ENCODE measurements at regions of chr12 and their contacts with region 1.

Region 1: GRCh38 chr12:27014085-27014858 is at the start of gene TM7SF3:
- DNase-seq: peak; percentile 97
- ATAC-seq: peak; percentile 93
- H3K4me3 ChIP-seq: peak within 1 kb of the TSS; percentile 78 to 86 (median 83)
- H3K4me3 Mint-ChIP-seq: peak within 1 kb of the TSS; percentile 96
- H3K27ac ChIP-seq: peak within 1 kb of the TSS; percentile 90 to 91
- H3K27ac Mint-ChIP-seq: peak within 1 kb of the TSS; percentile 96
- H3K4me1 ChIP-seq: peaks cover 24 to 25% of the 10 kb centered on the region in 2 donors
- H3K4me1 Mint-ChIP-seq: peaks cover 47% of the 10 kb centered on the region
- H3K27me3 ChIP-seq: no peaks in the 10 kb centered on the region
- H3K27me3 Mint-ChIP-seq: no peaks in the 10 kb centered on the region
- CTCF ChIP-seq: peak; percentile 92
- total RNA-seq, gene TM7SF3: 33.5 and 42.0 TPM in 2 replicates

Region 2: GRCh38 chr12:26701604-26702215 is 312.6 kb before region 1 on chr12:
- CTCF ChIA-PET with region 1: no interaction called
- POLR2A ChIA-PET with region 1: no interaction called
- intact Hi-C with region 1: loop called (anchors 10 kb)
- DNase-seq: peak; percentile 55
- ATAC-seq: no peak
- H3K4me3 ChIP-seq: no peak overlapping the region
- H3K4me3 Mint-ChIP-seq: no peak overlapping the region
- H3K27ac ChIP-seq: no peak overlapping the region
- H3K27ac Mint-ChIP-seq: no peak overlapping the region
- H3K4me1 ChIP-seq: peaks cover 11 to 14% of the 10 kb centered on the region in 2 donors
- H3K4me1 Mint-ChIP-seq: peaks cover 9% of the 10 kb centered on the region
- H3K27me3 ChIP-seq: no peaks in the 10 kb centered on the region
- H3K27me3 Mint-ChIP-seq: no peaks in the 10 kb centered on the region
- CTCF ChIP-seq: peak; percentile 87

Region 3: GRCh38 chr12:26853303-26854030 is 160.8 kb before region 1 on chr12:
- CTCF ChIA-PET with region 1: interaction called, 11 read pairs
- POLR2A ChIA-PET with region 1: no interaction called
- intact Hi-C with region 1: loop called (anchors 1 kb)
- DNase-seq: peak; percentile 79
- ATAC-seq: peak; percentile 92
- H3K4me3 ChIP-seq: no peak overlapping the region
- H3K4me3 Mint-ChIP-seq: no peak overlapping the region
- H3K27ac ChIP-seq: no peak overlapping the region
- H3K27ac Mint-ChIP-seq: peak overlapping the region; percentile 13
- H3K4me1 ChIP-seq: peaks cover 3 to 8% of the 10 kb centered on the region in 2 donors
- H3K4me1 Mint-ChIP-seq: no peaks in the 10 kb centered on the region
- H3K27me3 ChIP-seq: no peaks in the 10 kb centered on the region
- H3K27me3 Mint-ChIP-seq: no peaks in the 10 kb centered on the region
- CTCF ChIP-seq: peak; percentile 94

Region 4: GRCh38 chr12:26971963-26972362 is 42.3 kb before region 1 on chr12:
- CTCF ChIA-PET with region 1: interaction called, 3 read pairs
- POLR2A ChIA-PET with region 1: no interaction called
- intact Hi-C with region 1: loop called (anchors 5 kb)
- DNase-seq: peak; percentile 47
- ATAC-seq: peak; percentile 80
- H3K4me3 ChIP-seq: no peak overlapping the region
- H3K4me3 Mint-ChIP-seq: no peak overlapping the region
- H3K27ac ChIP-seq: no peak overlapping the region
- H3K27ac Mint-ChIP-seq: no peak overlapping the region
- H3K4me1 ChIP-seq: peaks cover 9 to 17% of the 10 kb centered on the region in 2 donors
- H3K4me1 Mint-ChIP-seq: peaks cover 20% of the 10 kb centered on the region
- H3K27me3 ChIP-seq: no peaks in the 10 kb centered on the region
- H3K27me3 Mint-ChIP-seq: no peaks in the 10 kb centered on the region
- CTCF ChIP-seq: no peak

Region 5: GRCh38 chr12:27123642-27124041 is 109.4 kb after region 1 on chr12:
- CTCF ChIA-PET with region 1: interaction called, 3 read pairs
- POLR2A ChIA-PET with region 1: no interaction called
- intact Hi-C with region 1: loop called (anchors 1 kb)
- DNase-seq: peak; percentile 48
- ATAC-seq: no peak
- H3K4me3 ChIP-seq: no peak overlapping the region
- H3K4me3 Mint-ChIP-seq: no peak overlapping the region
- H3K27ac ChIP-seq: no peak overlapping the region
- H3K27ac Mint-ChIP-seq: no peak overlapping the region
- H3K4me1 ChIP-seq: no peaks in the 10 kb centered on the region
- H3K4me1 Mint-ChIP-seq: no peaks in the 10 kb centered on the region
- H3K27me3 ChIP-seq: no peaks in the 10 kb centered on the region
- H3K27me3 Mint-ChIP-seq: no peaks in the 10 kb centered on the region
- CTCF ChIP-seq: peak; percentile 58

Region 6: DNA sequence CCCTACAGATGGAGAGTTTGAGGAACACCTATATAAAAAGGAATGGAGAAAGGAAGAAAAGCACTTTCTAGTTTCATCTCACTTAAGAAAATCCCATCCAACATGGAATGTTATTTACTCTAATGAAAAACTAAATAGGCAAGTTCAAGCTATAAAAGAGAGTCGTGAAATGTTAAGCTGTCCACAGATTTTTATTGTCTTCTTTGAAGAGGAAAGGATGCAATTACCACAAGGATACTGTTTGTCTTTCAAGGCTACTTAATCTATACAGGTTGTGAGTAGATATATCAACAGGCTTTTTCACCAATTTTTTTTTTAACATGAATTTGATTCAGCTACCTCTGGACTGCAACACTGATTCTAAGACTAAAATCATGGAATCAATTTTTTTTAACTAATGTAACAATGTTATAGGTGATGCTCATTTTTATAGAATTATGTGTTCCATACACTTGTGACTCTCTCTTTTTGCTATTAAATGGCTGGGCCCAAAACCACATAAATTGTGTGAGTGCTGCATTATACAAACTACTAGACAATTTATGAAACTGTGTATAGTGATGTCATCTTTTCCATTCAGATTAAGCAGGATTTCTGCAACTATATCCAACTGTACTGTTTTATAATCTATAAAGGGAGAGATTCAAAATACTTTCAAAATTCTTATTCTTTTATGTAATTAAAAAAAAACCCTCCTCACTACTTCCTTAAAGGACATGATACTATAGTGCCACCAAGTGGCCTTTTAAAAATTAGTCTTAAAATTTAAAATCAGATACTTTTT is 291.6 kb after region 1 on chr12:
- CTCF ChIA-PET with region 1: interaction called, 103 read pairs
- POLR2A ChIA-PET with region 1: interaction called, 3 read pairs
- intact Hi-C with region 1: loop called (anchors 1 kb)
- DNase-seq: peak; percentile 57
- ATAC-seq: no peak
- H3K4me3 ChIP-seq: no peak overlapping the region
- H3K4me3 Mint-ChIP-seq: no peak overlapping the region
- H3K27ac ChIP-seq: no peak overlapping the region
- H3K27ac Mint-ChIP-seq: no peak overlapping the region
- H3K4me1 ChIP-seq: no peaks in the 10 kb centered on the region
- H3K4me1 Mint-ChIP-seq: no peaks in the 10 kb centered on the region
- H3K27me3 ChIP-seq: no peaks in the 10 kb centered on the region
- H3K27me3 Mint-ChIP-seq: no peaks in the 10 kb centered on the region
- CTCF ChIP-seq: peak; percentile 84